ENCODE measurements at regions of chr7 and their contacts with region 1.

Region 1: GRCh38 chr7:116588641-116589594 is 64.1 kb downstream of the CAV1 start:
- DNase-seq: no peak
- H3K4me3 Mint-ChIP-seq: no peak overlapping the region
- H3K27ac Mint-ChIP-seq: no peak overlapping the region
- H3K4me1 Mint-ChIP-seq: peaks cover 21% of the 10 kb centered on the region
- H3K27me3 Mint-ChIP-seq: peaks cover 21% of the 10 kb centered on the region

Region 2: GRCh38 chr7:116173051-116174028 is 415.6 kb before region 1 on chr7:
- CTCF ChIA-PET with region 1: interaction called, 14 read pairs
- POLR2A ChIA-PET with region 1: no interaction called
- intact Hi-C with region 1: loop called (anchors 1 kb)
- DNase-seq: no peak
- H3K4me3 Mint-ChIP-seq: no peak overlapping the region
- H3K27ac Mint-ChIP-seq: no peak overlapping the region
- H3K4me1 Mint-ChIP-seq: no peaks in the 10 kb centered on the region
- H3K27me3 Mint-ChIP-seq: peaks cover 4% of the 10 kb centered on the region

Region 3: DNA sequence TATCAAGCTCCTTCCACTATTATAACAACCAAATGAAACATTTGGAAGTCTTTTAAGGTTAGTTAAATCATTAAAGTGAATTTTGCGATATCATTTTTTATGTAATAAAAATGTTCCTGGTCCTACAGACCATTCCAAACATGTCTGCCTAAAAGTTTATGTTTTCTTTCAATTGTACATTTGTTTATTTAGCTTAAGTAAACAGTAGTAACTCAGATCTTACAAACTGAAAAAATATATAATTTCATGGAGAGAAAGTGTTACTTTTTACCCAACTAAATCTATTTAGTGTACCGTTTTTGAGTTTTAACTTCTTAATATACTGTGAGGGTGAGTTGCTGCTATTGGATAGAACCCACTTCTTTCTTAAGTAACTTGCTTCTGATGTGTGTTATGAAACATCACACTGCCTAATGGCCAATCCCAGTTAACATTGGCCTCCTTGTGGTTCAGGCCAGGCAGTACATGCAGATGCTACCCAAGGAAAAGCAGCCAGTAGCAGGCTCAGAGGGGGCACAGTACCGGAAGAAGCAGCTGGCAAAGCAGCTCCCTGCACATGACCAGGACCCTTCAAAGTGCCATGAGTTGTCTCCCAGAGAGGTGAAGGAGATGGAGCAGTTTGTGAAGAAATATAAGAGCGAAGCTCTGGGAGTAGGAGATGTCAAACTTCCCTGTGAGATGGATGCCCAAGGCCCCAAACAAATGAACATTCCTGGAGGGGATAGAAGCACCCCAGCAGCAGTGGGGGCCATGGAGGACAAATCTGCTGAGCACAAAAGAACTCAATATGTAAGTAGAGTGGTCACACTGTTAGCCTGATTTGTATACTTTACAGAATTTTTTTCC is 339.0 kb before region 1 on chr7:
- CTCF ChIA-PET with region 1: interaction called, 81 read pairs
- POLR2A ChIA-PET with region 1: no interaction called
- intact Hi-C with region 1: no loop called
- DNase-seq: no peak
- H3K4me3 Mint-ChIP-seq: no peak overlapping the region
- H3K27ac Mint-ChIP-seq: peak overlapping the region; percentile 31
- H3K4me1 Mint-ChIP-seq: peaks cover 27% of the 10 kb centered on the region
- H3K27me3 Mint-ChIP-seq: no peaks in the 10 kb centered on the region

Region 4: GRCh38 chr7:116525913-116526861 is 62.7 kb before region 1 on chr7:
- CTCF ChIA-PET with region 1: interaction called, 28 read pairs
- POLR2A ChIA-PET with region 1: no interaction called
- intact Hi-C with region 1: loop called (anchors 2 kb)
- DNase-seq: peak; percentile 71
- H3K4me3 Mint-ChIP-seq: peak overlapping the region; percentile 78
- H3K27ac Mint-ChIP-seq: no peak overlapping the region
- H3K4me1 Mint-ChIP-seq: peaks cover 21% of the 10 kb centered on the region
- H3K27me3 Mint-ChIP-seq: peaks cover 67% of the 10 kb centered on the region

Region 5: DNA sequence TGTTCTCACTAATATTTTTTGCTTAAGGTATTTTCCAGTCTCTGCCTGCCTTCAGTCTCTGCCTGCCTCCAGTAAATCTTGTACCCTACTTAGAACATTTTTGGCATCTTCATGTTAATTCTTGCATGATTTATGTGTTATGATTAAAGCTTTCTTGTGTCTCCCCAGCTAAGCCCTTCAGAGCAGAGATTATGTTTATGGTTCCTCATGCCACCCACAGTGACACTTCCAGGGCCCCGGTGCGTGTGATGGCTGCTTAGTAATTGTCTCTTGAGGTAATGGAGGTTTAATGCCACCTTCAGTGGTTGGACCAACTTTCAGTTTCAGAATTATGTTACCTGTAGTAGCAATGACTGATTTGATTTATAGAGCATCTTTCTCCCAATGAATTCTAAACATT is 12.5 kb after region 1 on chr7:
- CTCF ChIA-PET with region 1: interaction called, 30 read pairs
- POLR2A ChIA-PET with region 1: no interaction called
- intact Hi-C with region 1: no loop called
- DNase-seq: peak; percentile 61
- H3K4me3 Mint-ChIP-seq: no peak overlapping the region
- H3K27ac Mint-ChIP-seq: no peak overlapping the region
- H3K4me1 Mint-ChIP-seq: peaks cover 9% of the 10 kb centered on the region
- H3K27me3 Mint-ChIP-seq: peaks cover 6% of the 10 kb centered on the region

Region 6: GRCh38 chr7:116786791-116787443 is 198.0 kb after region 1 on chr7:
- CTCF ChIA-PET with region 1: interaction called, 19 read pairs
- POLR2A ChIA-PET with region 1: no interaction called
- intact Hi-C with region 1: loop called (anchors 2 kb)
- DNase-seq: peak; percentile 40
- H3K4me3 Mint-ChIP-seq: no peak overlapping the region
- H3K27ac Mint-ChIP-seq: no peak overlapping the region
- H3K4me1 Mint-ChIP-seq: no peaks in the 10 kb centered on the region
- H3K27me3 Mint-ChIP-seq: no peaks in the 10 kb centered on the region

Region 7: DNA sequence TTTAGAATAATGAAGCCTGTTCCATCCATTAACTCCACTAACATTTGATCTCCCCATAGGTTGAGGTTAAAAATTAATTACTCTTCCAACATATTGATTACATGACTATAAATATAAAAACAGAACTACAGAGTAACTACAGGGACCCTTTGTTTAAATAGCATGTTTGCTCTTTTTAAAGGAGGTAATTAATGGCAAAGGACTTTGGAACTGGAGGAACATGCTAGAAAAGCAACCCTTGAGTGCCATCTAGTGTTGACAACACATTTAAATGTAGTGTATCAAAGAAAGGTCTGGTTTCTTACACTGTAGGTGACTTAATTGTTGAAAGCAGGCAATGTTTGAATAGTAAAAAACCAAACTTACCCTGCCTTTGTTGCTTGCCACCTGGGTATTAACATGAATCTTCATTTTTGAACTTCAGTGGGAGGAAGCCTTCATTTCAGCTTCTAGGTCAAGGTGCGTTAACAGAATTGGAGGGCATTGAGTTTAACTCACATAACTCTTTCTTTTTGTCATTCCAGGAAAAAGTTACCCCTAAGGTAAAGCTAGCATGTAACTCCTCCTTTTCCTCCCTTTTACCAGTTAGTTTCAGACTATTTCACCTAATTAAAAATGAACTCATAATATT is 220.8 kb after region 1 on chr7:
- CTCF ChIA-PET with region 1: interaction called, 76 read pairs
- POLR2A ChIA-PET with region 1: no interaction called
- intact Hi-C with region 1: loop called (anchors 1 kb)
- DNase-seq: no peak
- H3K4me3 Mint-ChIP-seq: no peak overlapping the region
- H3K27ac Mint-ChIP-seq: no peak overlapping the region
- H3K4me1 Mint-ChIP-seq: no peaks in the 10 kb centered on the region
- H3K27me3 Mint-ChIP-seq: no peaks in the 10 kb centered on the region

Measured in activated CD4-positive, alpha-beta memory T cell treated with anti-CD3 and anti-CD28 coated beads for 36 hours (primary cell).